HEK293 (cell line): ENCODE measurements at regions of chr1 and their contacts with region 1.

Region 1: GRCh38 chr1:23809751-23810171 is 9.2 kb upstream of the GALE start:
- H3K4me3 ChIP-seq: no peak overlapping the region
- H3K27ac ChIP-seq: no peak overlapping the region
- H3K4me1 ChIP-seq: no peaks in the 10 kb centered on the region
- CTCF ChIP-seq: peak; percentile 84

Region 2: DNA sequence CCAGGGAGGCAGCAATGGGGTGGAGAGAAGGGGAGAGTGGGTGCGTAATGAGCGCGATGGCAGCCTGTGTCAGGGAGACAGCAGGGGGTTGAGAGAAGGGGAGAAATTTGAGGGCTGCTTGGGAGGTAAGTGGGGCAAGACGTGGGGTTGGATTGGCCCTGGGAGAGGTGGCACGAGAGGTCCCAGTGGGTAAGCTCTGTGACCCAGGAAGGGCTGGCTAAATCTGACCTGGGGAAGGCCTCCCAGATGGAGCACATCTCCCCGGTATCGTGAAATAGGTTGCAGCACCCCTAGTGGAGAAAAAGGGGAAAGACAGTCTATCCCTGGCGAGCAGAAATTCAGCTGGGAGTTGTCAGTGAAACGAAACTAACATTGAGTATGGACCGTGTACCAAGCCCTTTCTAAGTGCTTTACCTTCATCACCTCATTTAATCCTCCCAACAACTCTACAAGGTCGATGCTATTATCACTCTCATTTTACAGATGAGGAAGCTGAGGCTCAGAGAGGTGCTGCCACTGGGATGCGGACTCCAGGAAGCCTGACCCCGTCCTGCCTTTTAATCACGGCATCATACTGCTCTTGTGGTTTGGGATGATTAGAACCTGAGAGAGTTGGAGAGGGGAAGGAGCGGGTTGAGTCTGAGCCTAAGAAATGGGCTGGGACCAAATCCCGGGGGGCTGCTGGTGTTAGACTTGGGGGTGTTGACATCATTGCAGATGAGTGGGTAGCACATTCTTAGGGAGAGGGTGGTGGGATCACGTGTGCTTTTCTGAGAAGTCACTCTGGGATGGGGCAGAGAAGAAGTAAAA is 174.7 kb before region 1 on chr1:
- CTCF ChIA-PET with region 1: no interaction called
- POLR2A ChIA-PET with region 1: no interaction called
- H3K4me3 ChIP-seq: peak overlapping the region; percentile 15
- H3K27ac ChIP-seq: no peak overlapping the region
- H3K4me1 ChIP-seq: no peaks in the 10 kb centered on the region
- CTCF ChIP-seq: peak; percentile 75

Region 3: GRCh38 chr1:23751050-23751814 is 58.5 kb before region 1 on chr1:
- CTCF ChIA-PET with region 1: no interaction called
- POLR2A ChIA-PET with region 1: no interaction called
- H3K4me3 ChIP-seq: no peak overlapping the region
- H3K27ac ChIP-seq: peak overlapping the region; percentile 39; the same call in 1 of the 2 replicates
- H3K4me1 ChIP-seq: no peaks in the 10 kb centered on the region
- CTCF ChIP-seq: peak; percentile 61; the same call in 1 of the 2 replicates

Region 4: DNA sequence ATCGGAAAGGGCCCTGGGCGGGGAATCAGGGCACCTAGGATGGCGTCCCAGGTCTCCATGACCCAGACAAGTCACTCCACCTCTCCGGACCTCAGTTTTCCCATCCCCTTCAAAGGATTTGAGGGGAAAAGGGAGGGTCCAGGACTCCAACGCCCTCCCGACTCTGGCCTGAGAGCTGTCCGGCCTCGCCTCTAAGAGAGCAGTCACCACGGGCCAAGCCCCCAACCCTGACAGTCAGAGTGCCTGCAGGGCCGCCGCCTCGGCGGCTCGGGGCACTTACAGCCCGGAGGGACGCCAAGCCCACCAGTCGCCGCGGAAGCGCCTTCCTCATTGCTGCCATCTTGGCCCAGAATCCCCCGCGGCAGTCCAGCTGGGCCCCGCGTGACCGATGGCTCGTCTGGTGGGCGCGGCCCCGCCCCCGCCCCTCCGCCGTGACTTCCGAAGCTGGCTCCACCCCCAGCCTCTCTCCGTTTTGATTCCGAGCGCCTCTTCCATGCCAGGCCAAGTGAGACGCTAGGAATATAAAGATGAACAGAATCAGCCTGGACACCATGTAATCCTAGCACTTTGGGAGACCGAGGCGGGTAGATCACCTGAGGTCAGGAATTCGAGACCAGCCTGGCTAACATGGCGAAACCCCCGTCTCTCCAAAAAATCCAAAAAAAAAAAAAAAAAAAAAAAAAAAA is 15.5 kb after region 1 on chr1 and contains the start of gene HMGCL:
- CTCF ChIA-PET with region 1: interaction called, 80 read pairs
- POLR2A ChIA-PET with region 1: interaction called, 13 read pairs
- H3K4me3 ChIP-seq: peak within 1 kb of the TSS; percentile 97
- H3K27ac ChIP-seq: peak within 1 kb of the TSS; percentile 57
- H3K4me1 ChIP-seq: no peaks in the 10 kb centered on the region
- CTCF ChIP-seq: no peak

Region 5: GRCh38 chr1:23838401-23838866 is 28.7 kb after region 1 on chr1:
- CTCF ChIA-PET with region 1: interaction called, 17 read pairs
- POLR2A ChIA-PET with region 1: no interaction called
- H3K4me3 ChIP-seq: peak overlapping the region; percentile 21
- H3K27ac ChIP-seq: no peak overlapping the region
- H3K4me1 ChIP-seq: no peaks in the 10 kb centered on the region
- CTCF ChIP-seq: peak; percentile 23; the same call in 1 of the 2 replicates

Region 6: GRCh38 chr1:23845163-23845562 is 35.4 kb after region 1 on chr1:
- CTCF ChIA-PET with region 1: interaction called, 17 read pairs
- POLR2A ChIA-PET with region 1: no interaction called
- H3K4me3 ChIP-seq: no peak overlapping the region
- H3K27ac ChIP-seq: no peak overlapping the region
- H3K4me1 ChIP-seq: no peaks in the 10 kb centered on the region
- CTCF ChIP-seq: no peak

Region 7: DNA sequence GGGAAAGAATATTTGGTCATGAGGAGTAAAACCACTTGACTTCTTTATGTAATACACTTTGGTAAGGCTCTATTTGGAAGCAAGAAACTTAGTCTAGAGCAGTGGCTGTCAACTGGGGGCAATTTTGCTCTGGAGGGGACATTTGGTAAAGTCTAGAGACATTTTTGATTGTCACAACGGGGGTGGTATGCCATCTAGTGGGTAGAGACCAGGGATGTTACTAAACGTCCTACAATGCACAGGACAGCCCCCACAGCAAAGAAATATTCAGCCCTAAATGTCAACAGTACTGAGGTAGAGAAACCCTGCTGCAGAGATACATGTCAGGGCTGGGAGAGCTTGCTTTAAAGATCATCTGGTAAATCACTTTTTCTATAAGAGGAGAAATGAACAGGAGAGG is 44.8 kb after region 1 on chr1:
- CTCF ChIA-PET with region 1: interaction called, 18 read pairs
- POLR2A ChIA-PET with region 1: no interaction called
- H3K4me3 ChIP-seq: no peak overlapping the region
- H3K27ac ChIP-seq: no peak overlapping the region
- H3K4me1 ChIP-seq: no peaks in the 10 kb centered on the region
- CTCF ChIP-seq: peak; percentile 60

Region 8: DNA sequence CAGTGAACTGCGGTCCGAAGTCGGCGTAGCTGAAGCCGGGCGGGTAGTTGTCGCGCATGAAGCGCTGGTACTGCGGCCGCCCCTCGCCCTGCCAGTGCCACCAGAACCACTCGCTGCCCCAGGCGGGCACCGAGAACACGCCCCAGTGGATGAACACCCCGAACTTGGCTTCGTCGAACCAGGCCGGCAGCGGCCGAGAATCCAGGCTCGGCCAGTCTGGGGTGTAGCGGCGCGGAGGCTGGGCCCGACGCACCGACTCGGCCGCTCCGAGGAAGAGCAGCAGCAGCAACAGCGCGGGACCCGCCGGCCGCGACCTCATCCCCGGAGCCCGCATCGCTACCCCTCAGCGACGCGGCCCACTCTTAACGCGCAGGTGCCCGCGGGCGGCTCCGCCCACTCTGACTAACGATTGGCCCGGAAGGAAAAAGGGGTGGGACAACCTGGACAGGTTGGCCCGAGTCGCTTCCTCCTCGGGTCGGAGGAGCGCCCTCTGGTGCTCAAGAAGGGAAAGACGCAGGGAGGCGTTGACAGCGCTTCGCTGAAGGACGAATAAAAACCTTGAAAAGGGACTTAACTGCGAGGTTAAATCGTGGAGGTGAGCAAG is 58.3 kb after region 1 on chr1 and contains the start of gene FUCA1:
- CTCF ChIA-PET with region 1: interaction called, 32 read pairs
- POLR2A ChIA-PET with region 1: no interaction called
- H3K4me3 ChIP-seq: peak within 1 kb of the TSS; percentile 81
- H3K27ac ChIP-seq: peak within 1 kb of the TSS; percentile 35; the same call in 1 of the 2 replicates
- H3K4me1 ChIP-seq: 0 out of 2 replicates have a peak, but pooled peaks cover 6% of the 10 kb centered on the region
- CTCF ChIP-seq: peak; percentile 94

Region 9: DNA sequence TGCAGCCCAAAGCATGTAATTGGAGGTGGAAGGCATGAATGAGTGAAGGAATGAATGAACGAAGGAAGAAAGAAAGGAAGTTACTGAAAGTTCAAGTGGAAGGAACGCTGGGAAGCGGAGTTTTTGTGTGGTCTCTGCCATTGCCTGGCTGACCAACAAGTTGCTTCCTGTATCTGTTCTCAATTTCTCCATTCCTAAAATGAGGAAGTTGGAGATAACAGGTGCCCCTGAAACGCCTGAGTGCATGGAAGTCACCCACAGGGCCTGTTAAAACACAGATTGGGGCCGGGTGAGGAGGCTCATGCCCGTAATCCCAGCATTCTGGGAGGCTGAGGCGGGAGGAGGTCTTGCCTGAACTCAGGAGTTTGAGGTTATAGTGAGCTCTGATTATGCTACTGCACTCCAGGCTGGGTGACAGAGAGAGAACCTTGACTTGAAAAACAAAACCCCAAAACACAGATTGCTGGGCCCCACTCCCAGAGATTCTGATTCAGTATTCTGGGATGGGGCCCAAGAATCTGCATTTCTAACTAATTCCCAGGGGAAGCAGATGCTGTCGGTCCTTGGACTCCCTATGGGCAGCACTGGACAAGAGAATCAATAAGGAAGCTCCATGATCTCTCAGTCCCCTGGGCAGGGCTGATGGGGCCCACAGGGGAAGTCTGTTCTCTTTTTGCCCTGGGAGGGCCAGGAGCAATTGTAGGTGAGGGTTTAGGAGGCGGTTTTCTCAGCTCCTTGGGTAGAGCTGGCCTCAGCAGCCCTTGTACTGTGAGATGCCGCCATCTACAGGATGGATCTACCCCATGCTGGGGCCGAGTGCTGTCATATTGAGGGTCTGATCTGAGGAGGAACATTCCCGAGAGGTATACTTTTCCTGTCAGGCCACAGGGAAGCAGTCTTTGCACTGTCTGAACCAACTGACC is 106.7 kb after region 1 on chr1:
- CTCF ChIA-PET with region 1: interaction called, 33 read pairs
- POLR2A ChIA-PET with region 1: no interaction called
- H3K4me3 ChIP-seq: no peak overlapping the region
- H3K27ac ChIP-seq: no peak overlapping the region
- H3K4me1 ChIP-seq: no peaks in the 10 kb centered on the region
- CTCF ChIP-seq: peak; percentile 73